ENCODE measurements at regions of chr1 and their contacts with region 1.

Region 1: DNA sequence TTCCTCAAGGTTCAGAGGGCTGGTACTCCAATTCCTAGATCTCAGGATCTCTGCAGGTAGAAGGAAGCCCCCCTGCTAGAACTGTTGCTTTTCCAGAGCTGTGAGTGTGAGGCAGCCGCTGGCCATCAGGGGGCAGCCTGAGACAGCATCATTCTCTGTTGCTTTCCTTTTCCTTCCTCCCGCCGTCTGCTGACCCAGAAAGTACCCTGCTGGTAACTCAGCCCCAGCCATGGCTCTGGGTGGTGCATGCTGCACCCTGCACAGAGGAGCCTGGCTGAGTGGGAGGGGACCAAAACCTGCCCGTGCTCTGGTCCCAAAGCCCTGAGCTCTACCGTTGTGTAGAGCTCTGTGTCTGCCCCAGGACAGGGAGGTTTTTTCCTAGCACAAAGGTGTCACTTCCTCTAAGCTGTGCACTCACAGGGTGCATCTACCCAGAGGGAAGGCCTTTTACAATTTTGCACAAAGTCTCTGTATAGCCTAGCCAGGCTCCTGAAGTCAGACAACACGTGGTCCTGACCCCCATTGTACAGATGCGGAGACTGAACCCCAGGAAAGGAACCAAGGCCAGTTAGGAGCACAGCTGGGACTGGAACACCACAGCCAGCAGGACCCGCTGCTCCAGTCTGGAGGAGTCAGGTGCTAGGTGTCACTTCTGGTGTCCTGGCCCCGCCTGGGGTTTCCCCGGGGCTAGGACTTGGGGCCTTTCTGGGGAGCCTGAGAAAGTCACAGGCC is 5.6 kb upstream of the FAM131C start:
- DNase-seq: peak; percentile 86
- H3K4me3 ChIP-seq: no peak overlapping the region
- H3K27ac ChIP-seq: no peak overlapping the region
- H3K4me1 ChIP-seq: no peaks in the 10 kb centered on the region
- H3K27me3 ChIP-seq: no peaks in the 10 kb centered on the region
- CTCF ChIP-seq: peak; percentile 96

Region 2: DNA sequence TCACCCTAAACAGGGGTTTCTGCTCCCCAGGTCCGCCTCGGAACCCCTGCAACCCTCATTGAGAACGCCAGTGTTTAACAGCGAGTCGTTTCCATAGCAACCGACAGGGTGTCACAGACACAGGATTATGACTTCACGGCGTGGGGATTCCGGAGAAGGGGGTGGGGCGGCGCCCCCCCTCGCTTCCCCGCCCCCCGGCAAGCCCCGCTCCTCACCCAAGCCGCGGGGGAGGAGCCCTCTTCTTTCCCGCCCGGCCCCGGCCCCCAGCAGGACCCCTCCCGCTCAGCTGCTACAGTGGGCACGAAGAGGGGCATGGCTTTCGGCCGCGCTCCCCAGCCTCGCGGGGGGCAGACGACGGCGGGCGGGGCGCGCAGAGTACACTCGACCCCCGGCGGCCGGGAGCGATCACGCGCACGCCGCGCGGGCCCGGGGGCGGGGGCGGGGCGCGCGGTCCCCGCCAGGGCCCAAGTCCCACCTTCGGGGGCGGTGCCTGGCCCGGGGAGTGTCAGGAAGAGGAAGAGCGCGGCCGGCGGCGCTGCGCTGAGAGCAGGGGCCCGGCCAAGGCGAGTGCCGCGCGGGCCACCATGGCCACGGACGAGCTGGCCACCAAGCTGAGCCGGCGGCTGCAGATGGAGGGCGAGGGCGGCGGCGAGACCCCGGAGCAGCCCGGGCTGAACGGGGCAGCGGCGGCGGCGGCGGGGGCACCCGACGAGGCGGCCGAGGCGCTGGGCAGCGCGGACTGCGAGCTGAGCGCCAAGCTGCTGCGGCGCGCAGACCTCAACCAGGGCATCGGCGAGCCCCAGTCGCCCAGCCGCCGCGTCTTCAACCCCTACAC is 669.5 kb before region 1 on chr1 and contains the start of gene EFHD2:
- CTCF ChIA-PET with region 1: no interaction called
- POLR2A ChIA-PET with region 1: no interaction called
- intact Hi-C with region 1: no loop called
- DNase-seq: peak; percentile 93
- H3K4me3 ChIP-seq: peak within 1 kb of the TSS; percentile 96
- H3K27ac ChIP-seq: peak within 1 kb of the TSS; percentile 78
- H3K4me1 ChIP-seq: peaks cover 13% of the 10 kb centered on the region
- H3K27me3 ChIP-seq: no peaks in the 10 kb centered on the region
- CTCF ChIP-seq: no peak
- total RNA-seq, gene EFHD2: 30.6 and 32.5 TPM in 2 replicates

Region 3: GRCh38 chr1:16101623-16102022 is 22.5 kb after region 1 on chr1:
- CTCF ChIA-PET with region 1: no interaction called
- POLR2A ChIA-PET with region 1: no interaction called
- intact Hi-C with region 1: no loop called
- DNase-seq: no peak
- H3K4me3 ChIP-seq: no peak overlapping the region
- H3K27ac ChIP-seq: no peak overlapping the region
- H3K4me1 ChIP-seq: peaks cover 4% of the 10 kb centered on the region
- H3K27me3 ChIP-seq: no peaks in the 10 kb centered on the region
- CTCF ChIP-seq: no peak

Region 4: DNA sequence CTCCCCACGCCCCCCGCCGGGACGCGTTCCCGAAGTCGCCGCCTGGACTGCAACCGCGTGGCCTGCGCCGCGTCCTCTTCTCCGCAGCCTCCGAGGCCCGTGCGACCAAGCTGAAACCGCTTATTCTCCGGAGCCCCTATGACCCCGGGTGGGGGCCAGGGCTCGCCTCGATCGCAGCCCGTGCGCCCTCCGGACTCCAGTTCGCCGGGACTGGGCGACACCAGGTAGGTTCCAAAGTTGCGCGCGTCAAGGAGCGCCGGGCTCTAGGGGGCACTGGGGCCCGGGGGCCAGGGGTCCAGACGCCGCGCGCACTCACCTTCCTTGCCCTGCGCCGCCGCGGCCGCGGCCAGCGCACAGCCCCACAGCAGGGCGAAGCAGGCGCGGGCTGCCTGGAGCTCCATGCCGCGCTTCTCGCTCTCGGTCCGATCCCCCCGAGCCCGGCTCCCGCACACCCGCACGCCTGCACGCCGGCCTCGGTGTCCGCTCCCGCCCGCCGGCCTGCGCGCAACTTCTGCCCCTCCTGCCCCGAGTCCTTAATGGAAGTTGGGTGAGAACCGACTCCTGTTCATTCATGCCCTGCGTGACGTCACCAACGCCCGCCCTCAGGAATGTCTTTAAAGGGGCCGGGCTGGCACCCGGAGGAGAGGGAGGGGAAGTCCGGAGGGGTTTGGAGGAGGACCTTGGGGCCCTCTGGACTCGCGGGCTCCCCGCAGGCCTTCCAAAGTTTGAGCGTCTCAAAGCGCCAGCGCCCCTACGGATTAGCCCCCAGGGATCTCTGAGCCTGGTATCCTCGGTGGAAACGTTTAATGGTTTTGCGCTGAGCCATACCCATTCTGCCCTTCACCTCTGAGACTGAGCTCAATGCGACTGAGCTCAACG is 76.7 kb after region 1 on chr1 and contains the start of gene EPHA2:
- CTCF ChIA-PET with region 1: interaction called, 8 read pairs
- POLR2A ChIA-PET with region 1: no interaction called
- intact Hi-C with region 1: loop called (anchors 2 kb)
- DNase-seq: peak; percentile 95
- H3K4me3 ChIP-seq: peak within 1 kb of the TSS; percentile 93
- H3K27ac ChIP-seq: peak within 1 kb of the TSS; percentile 95
- H3K4me1 ChIP-seq: peaks cover 44% of the 10 kb centered on the region
- H3K27me3 ChIP-seq: no peaks in the 10 kb centered on the region
- CTCF ChIP-seq: no peak
- total RNA-seq, gene EPHA2: 70.5 and 91.6 TPM in 2 replicates

Region 5: DNA sequence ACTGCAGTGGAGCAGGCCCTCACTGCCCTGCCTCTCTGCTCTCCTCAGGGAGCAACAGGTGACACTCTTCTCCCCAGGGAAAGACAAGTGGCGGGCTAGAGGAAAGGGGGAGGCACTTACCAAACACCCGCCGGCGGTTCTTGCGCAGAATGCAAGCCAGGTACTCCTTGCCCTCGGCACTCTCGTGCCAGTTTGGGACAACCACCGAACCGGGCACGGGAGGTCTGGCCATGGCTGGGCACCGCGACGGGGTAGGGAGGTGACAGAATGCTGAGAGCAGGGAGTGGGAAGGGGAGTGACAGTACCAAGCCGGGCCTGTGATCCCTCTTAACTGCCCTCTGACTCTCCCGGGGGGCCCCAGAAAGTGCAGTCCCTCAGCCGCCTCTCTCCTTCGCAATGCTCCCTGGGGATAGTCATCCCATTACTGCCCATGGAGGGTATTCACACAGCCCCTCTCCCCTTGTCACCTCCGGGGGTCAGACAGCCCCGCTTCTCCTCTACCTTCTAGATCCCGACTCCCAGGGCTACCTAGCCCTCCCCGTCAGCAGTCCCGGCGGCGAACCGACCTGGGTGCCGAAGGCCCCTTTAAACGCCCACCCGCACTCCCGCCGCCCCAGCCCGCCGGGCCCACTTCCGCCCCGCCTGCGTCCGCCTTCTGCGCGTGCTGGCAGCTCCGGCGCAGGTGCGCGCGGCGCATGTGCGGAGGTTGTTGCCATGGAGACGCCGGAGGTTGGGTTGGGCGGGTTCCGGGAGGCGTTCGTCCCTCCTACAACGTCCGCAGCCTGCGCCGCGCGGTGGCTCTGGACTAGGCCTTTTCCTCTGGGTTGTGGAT is 157.6 kb after region 1 on chr1 and contains the start of gene CPLANE2:
- CTCF ChIA-PET with region 1: no interaction called
- POLR2A ChIA-PET with region 1: no interaction called
- intact Hi-C with region 1: loop called (anchors 2 kb)
- DNase-seq: peak; percentile 93
- H3K4me3 ChIP-seq: peak within 1 kb of the TSS; percentile 67
- H3K27ac ChIP-seq: peak within 1 kb of the TSS; percentile 71
- H3K4me1 ChIP-seq: peaks cover 12% of the 10 kb centered on the region
- H3K27me3 ChIP-seq: no peaks in the 10 kb centered on the region
- CTCF ChIP-seq: no peak
- total RNA-seq, gene CPLANE2: 5.5 and 7.6 TPM in 2 replicates

Region 6: DNA sequence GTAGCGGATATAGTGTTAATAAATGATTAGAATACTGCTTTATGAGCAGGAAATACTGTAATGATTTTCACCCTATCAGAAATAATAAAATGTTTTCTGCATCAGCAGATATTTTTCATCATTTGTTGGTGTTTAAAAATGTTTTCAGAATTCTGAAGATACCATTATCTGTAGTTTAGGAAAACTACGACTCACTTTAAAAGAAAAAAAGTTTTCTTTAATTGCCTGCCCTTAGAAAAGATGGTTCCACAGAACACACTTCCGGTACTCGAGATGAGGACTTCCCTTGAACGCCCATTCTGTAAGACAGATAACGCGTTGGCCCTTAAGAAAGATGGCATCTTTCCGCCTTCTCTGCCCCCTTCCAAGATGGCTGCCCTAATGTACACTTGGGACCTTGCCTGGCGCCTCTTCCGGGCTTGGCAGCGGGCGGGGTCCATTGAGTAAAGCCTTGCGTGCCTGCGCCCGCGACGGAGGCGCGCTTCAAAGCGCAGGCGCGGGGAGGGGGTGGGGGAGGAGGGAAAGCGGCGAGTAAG is 287.7 kb after region 1 on chr1 and contains the start of gene SZRD1:
- CTCF ChIA-PET with region 1: interaction called, 14 read pairs
- POLR2A ChIA-PET with region 1: no interaction called
- intact Hi-C with region 1: loop called (anchors 2 kb)
- DNase-seq: peak; percentile 100
- H3K4me3 ChIP-seq: peak within 1 kb of the TSS; percentile 87
- H3K27ac ChIP-seq: peak within 1 kb of the TSS; percentile 93
- H3K4me1 ChIP-seq: peaks cover 10% of the 10 kb centered on the region
- H3K27me3 ChIP-seq: no peaks in the 10 kb centered on the region
- CTCF ChIP-seq: no peak
- total RNA-seq, gene SZRD1: 174 and 187 TPM in 2 replicates